Tibial artery (tissue), 4 donors: ENCODE measurements at regions of chr18 and their contacts with region 1.

Region 1: DNA sequence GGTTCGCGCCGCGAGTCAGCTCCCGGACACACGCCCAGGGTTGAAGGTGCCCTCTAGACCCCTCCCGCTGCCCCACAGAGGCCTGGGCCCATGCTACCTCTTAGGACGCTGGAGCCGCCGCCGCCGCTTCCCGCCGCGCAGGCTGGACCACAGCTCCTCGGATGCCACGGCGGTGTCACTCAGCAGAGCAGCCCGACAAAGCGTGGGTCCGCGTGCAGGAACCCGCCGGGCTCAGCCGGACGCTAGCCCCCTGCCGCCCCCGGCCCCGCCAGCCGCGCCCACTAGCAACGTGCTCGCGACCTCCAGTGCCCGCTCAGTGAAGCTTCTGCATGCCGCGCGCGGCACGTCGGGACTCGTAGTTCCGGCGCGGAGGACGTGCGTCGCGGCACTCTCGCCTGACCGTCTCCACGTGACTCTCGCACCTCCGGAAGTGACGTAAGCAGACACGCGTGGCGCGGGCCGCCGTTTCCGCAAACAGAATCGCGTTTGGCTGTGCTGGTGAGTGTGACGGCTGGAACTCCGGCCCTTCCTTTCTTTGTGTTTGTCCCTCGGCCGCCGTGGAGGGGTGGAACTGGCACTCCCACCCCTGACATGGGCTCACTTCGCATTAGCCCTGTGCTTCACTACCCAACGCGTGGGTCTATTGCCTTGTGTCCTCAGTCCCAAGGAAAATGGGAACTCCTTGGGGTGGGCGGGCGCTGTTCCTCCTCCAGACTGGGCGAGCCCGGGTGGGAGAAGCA is at the starts of genes FAM210A and RNMT:
- DNase-seq: peak; percentile 94 to 97
- H3K4me3 ChIP-seq: peak within 1 kb of the TSS; percentile 92 to 97
- H3K27ac ChIP-seq: peak within 1 kb of the TSS; percentile 95 to 97
- H3K4me1 ChIP-seq: peaks cover 0 to 19% (median 9%) of the 10 kb centered on the region in 4 donors
- H3K27me3 ChIP-seq: no peaks in the 10 kb centered on the region
- CTCF ChIP-seq: no peak

Region 2: GRCh38 chr18:12883684-12884405 is 842.6 kb before region 1 on chr18 and contains the start of gene PTPN2:
- intact Hi-C with region 1: loop called (anchors 10 kb)
- DNase-seq: peak; percentile 94 to 97
- H3K4me3 ChIP-seq: peak within 1 kb of the TSS; percentile 78 to 82
- H3K27ac ChIP-seq: peak within 1 kb of the TSS; percentile 93 to 96
- H3K4me1 ChIP-seq: peaks cover 0 to 16% (median 9%) of the 10 kb centered on the region in 4 donors
- H3K27me3 ChIP-seq: no peaks in the 10 kb centered on the region
- CTCF ChIP-seq: no peak

Region 3: DNA sequence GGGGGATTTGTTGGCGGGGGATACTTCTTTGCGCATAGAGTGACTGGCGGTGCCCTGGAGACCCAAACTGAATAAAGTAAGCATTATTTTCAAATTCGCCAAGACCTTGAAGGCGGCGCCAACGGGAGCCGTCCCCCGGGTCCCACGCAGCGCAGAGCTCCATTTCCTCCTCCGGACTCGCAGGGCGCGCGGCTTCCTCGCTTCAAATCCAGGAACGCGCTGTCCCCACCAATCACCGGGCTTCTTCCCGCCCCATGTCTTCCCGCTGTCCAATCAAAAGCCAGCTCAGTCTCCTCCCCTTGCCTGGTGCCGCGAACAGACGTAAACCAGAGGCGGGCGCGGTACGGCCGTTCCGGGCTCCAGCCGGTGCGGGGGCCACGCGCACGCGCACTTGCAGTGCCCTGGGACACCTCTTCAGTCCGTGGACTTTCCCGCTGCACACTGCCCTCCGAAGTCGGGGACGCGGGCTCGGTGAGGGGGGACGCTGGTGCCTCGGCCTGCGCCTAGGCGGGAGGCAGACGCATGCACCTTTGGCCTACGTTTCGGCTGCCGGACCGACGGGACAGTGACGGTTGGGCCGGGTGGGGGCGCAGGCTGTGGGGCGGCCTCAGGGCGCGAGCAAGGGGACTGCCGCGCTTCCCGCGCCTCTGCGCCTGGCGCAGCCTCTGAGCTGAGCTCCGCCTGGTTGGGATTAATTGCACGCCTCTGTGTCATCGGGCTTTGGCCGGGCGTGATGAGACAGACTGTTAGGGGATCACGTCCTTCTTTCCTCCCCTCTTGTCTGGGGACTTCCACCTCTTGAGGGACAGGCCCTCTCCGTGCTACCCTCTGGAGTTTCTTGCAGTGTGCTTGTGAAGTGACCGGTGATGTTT is 735.2 kb before region 1 on chr18 and contains the start of gene CEP192:
- intact Hi-C with region 1: loop called (anchors 10 kb)
- DNase-seq: peak; percentile 97 to 98
- H3K4me3 ChIP-seq: peak within 1 kb of the TSS; percentile 81 to 90
- H3K27ac ChIP-seq: peak within 1 kb of the TSS; percentile 79 to 82
- H3K4me1 ChIP-seq: peaks cover 0 to 24% (median 17%) of the 10 kb centered on the region in 4 donors
- H3K27me3 ChIP-seq: no peaks in the 10 kb centered on the region
- CTCF ChIP-seq: no peak

Region 4: GRCh38 chr18:13221869-13222855 is 504.2 kb before region 1 on chr18:
- intact Hi-C with region 1: loop called (anchors 5 kb)
- DNase-seq: peak; percentile 65 to 85
- H3K4me3 ChIP-seq: peak overlapping the region; percentile 9 to 22
- H3K27ac ChIP-seq: peak overlapping the region; percentile 89
- H3K4me1 ChIP-seq: peaks cover 6 to 54% (median 44%) of the 10 kb centered on the region in 4 donors
- H3K27me3 ChIP-seq: no peaks in the 10 kb centered on the region
- CTCF ChIP-seq: no peak

Region 5: GRCh38 chr18:13548966-13549879 is 177.2 kb before region 1 on chr18:
- intact Hi-C with region 1: no loop called
- DNase-seq: no peak
- H3K4me3 ChIP-seq: no peak overlapping the region
- H3K27ac ChIP-seq: no peak overlapping the region
- H3K4me1 ChIP-seq: peaks cover 0 to 21% (median 13%) of the 10 kb centered on the region in 4 donors
- H3K27me3 ChIP-seq: no peaks in the 10 kb centered on the region
- CTCF ChIP-seq: no peak